Ascending aorta (tissue), 2 donors: ENCODE measurements at regions of chr7 and their contacts with region 1.

Region 1: DNA sequence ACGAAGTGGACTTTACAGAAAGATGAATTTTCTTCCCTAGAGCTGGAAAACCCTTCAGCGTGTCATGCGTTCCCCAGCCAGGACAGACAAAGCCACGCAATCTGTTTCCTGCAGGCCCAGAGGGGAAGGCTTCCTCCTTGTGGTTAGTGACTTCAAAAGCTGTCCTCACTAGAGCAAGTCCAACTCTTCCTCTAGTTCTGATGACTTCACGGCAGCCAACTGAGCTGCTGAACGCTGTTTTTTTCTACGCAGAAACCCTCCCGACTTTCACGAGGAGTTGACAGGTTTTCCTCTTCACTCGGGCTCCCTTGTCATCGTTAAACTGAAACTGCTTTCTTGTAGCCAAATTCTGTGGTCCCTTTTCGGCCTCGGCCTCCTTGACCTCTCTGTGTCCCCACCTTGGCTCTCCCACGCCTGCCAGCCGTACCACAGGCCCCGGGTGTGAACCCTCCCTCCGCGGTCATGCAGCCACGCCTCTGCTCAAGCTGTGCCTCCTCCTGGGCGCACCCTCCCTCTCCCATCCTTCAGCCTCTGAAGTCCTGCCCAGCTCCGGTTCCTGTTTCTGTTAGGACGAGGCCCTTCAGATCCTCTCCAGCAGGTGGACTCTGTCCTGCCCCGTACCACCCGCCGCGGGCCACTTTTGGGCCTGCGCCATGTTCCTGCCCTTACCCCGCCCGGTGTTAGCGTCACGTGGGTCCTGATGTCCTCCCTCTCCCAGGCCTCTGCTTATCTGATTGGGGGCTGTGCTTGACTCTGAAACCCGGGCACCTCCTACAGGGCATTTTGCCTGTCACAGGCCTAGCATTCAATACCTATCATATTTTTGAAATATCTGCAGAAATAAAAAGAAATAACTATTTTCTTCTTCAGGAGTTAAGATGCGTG is 39.3 kb downstream of the CUX1 start:
- DNase-seq: peak; percentile 72 to 93
- H3K4me3 ChIP-seq: peak overlapping the region; percentile 41 to 53
- H3K27ac ChIP-seq: peak overlapping the region; percentile 87 to 90
- H3K4me1 ChIP-seq: peaks cover 7 to 29% of the 10 kb centered on the region in 2 donors
- H3K27me3 ChIP-seq: no peaks in the 10 kb centered on the region
- CTCF ChIP-seq: peak in 1 of 3 experiments; percentile 69

Region 2: GRCh38 chr7:101823096-101823495 is 33.6 kb before region 1 on chr7:
- intact Hi-C with region 1: loop called (anchors 2 kb)
- DNase-seq: no peak
- H3K4me3 ChIP-seq: peak overlapping the region; percentile 6 to 31
- H3K27ac ChIP-seq: peak overlapping the region; percentile 21 to 44
- H3K4me1 ChIP-seq: peaks cover 3 to 32% of the 10 kb centered on the region in 2 donors
- H3K27me3 ChIP-seq: no peaks in the 10 kb centered on the region
- CTCF ChIP-seq: no peak

Region 3: DNA sequence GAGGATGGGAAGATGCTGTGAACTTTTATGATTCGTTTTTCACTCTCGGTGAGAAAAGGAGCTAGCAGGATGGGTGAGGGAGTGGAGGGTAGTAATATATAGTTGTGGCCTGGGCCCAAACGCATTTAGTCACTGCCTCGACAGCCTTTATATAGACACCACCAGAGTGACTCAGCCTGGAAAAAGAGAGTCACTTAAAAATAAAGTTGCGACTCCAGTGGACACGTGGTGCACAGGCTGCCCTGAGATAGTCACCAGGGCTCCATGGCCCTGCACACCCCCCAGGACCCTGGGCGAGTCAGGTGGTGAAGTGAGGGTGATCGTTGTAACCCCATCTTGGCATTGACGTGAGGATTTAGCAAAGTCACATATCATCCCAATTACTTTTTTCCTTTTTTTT is 67.5 kb after region 1 on chr7:
- intact Hi-C with region 1: loop called (anchors 5 kb)
- DNase-seq: peak; percentile 65 to 93
- H3K4me3 ChIP-seq: peak overlapping the region in 1 of 2 donors; percentile 56
- H3K27ac ChIP-seq: peak overlapping the region; percentile 89 to 95
- H3K4me1 ChIP-seq: peaks cover 7 to 25% of the 10 kb centered on the region in 2 donors
- H3K27me3 ChIP-seq: no peaks in the 10 kb centered on the region
- CTCF ChIP-seq: no peak

Region 4: GRCh38 chr7:101941481-101942383 is 85.0 kb after region 1 on chr7:
- intact Hi-C with region 1: no loop called
- DNase-seq: no peak
- H3K4me3 ChIP-seq: peak overlapping the region in 1 of 2 donors; percentile 20
- H3K27ac ChIP-seq: peak overlapping the region; percentile 73 to 88
- H3K4me1 ChIP-seq: peaks cover 17 to 45% of the 10 kb centered on the region in 2 donors
- H3K27me3 ChIP-seq: no peaks in the 10 kb centered on the region
- CTCF ChIP-seq: peak in 1 of 3 experiments; percentile 12